HCT116 (cell line): ENCODE measurements at regions of chr17 and their contacts with region 1.

Region 1: DNA sequence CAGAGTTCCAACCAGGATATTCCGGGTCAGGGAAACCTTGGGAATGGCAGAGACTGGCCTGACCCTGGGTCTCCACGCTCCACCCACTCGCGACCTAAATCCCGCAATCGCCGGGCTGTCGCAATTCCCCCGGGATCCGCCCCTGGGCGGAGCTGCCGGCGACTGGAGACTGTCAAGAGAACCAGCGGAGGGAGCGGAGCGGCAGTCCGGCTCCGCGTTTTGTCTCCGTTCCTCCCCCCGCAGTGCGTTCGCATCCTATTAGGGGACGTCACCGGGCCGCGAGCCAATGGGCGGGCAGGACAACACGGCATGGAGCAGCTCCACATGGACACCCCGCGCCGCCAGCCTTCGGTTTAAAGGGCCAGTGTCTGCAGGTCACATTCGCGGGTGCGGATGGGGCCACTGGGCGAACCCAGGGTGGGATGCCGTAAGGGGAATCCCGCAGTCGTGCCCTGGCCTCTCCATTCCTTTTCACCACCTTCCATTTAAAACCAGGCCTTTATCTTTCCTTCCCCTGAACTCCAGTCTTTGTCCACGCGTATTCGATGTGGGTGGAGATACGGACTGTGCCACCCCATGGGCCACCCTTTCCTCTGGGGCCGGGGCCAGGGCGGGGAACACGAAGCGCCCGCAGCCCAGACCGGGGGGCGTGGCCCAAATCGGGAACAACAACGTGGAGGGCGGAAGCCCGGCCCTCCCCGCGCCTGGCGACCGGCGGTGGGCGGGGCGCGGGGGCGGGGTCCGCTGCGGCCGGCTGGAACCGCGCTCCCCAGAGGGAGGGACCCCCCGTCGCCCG is 764 bp upstream of the MNT start:
- DNase-seq: peak; percentile 98
- ATAC-seq: peak; percentile 56
- H3K4me3 ChIP-seq: peak overlapping the region; percentile 48 to 96
- H3K27ac ChIP-seq: peak overlapping the region; percentile 97
- H3K4me1 ChIP-seq: peaks cover 49 to 83% of the 10 kb centered on the region in 2 experiments
- H3K27me3 ChIP-seq: no peaks in the 10 kb centered on the region
- CTCF ChIP-seq: no peak
- POLR2A ChIP-seq: no peak
- RAD21 ChIP-seq: no peak

Region 2: DNA sequence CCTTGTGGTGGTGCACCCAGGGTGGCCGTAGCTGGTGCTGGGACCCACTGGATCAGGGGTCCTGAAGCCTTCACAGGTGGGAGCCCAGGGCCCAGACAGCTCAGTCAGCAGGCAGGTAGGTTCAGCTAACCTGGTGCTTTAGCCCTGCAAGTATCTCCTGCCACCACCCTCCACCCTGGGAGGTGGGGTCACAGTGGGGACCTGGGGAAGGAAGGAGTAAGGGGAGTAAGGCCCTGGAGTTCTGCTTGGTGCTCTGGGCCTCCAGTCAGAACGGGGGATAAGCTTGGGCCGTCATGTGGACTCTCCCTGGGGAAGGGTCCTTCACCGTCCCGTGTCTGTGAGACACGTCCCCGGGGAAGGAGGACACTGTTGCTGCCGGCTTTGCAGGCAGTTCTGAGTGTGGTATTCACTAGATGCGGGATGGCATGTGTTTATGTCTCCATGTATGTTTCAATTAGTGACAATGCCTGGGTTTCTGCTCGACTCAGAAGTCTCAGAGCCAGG is 43.6 kb before region 1 on chr17:
- CTCF ChIA-PET with region 1: interaction called, 3 read pairs
- POLR2A ChIA-PET with region 1: interaction called, 3 read pairs
- RAD21 ChIA-PET with region 1: no interaction called
- intact Hi-C with region 1: loop called (anchors 2 kb)
- DNase-seq: no peak
- ATAC-seq: no peak
- H3K4me3 ChIP-seq: no peak overlapping the region
- H3K27ac ChIP-seq: peak overlapping the region; percentile 99
- H3K4me1 ChIP-seq: peaks cover 37 to 53% of the 10 kb centered on the region in 2 experiments
- H3K27me3 ChIP-seq: no peaks in the 10 kb centered on the region
- CTCF ChIP-seq: no peak
- POLR2A ChIP-seq: no peak
- RAD21 ChIP-seq: no peak

Region 3: GRCh38 chr17:2386400-2387085 is 15.1 kb before region 1 on chr17:
- CTCF ChIA-PET with region 1: interaction called, 38 read pairs
- POLR2A ChIA-PET with region 1: interaction called, 7 read pairs
- RAD21 ChIA-PET with region 1: interaction called, 6 to 7 read pairs
- intact Hi-C with region 1: no loop called
- DNase-seq: no peak
- ATAC-seq: no peak
- H3K4me3 ChIP-seq: no peak overlapping the region
- H3K27ac ChIP-seq: no peak overlapping the region
- H3K4me1 ChIP-seq: peaks cover 5 to 27% of the 10 kb centered on the region in 2 experiments
- H3K27me3 ChIP-seq: no peaks in the 10 kb centered on the region
- CTCF ChIP-seq: no peak
- POLR2A ChIP-seq: no peak
- RAD21 ChIP-seq: no peak

Region 4: DNA sequence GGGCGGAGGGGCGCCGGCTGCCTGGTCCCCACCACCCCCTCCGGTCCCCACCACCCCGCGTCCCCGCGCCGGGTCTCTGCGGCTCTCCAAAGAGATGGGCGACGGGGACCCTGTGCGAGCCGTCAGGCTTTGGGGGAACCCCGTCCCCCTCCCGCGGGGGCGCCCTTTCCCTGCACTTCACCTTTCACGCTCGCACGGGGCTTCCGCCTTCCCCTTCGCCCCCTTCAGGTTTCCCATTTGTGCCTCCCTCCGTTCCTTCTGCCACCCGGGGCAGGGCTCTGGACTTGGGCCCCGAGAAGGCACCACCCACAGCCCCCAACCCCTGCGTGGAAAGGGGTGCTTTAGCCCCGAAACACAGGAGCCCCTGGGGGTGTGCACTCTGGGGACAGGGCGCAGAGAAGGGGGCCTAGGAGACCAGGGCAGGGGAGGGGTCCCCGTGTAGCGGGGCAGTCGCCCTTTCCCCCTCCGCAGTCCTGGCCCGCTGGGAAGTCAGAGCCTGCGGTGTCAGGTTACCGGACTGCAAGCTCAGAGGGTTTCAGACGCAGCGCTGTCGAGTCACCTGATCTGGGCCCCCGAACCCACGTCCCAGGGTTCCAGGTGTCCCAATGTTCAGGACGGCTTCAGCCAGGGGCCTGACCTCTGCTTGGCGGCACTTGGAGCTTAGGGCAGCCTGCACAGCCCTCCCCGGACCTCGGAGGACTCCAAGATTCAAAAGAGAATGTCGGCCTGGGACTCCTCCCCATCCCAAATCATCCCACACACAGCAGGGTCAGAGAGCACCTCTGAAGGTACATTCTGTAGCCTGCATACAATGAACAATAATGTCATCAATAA is 354.5 kb after region 1 on chr17:
- CTCF ChIA-PET with region 1: no interaction called
- POLR2A ChIA-PET with region 1: no interaction called
- RAD21 ChIA-PET with region 1: no interaction called
- intact Hi-C with region 1: no loop called
- DNase-seq: no peak
- ATAC-seq: peak; percentile 69
- H3K4me3 ChIP-seq: peak overlapping the region; percentile 46 to 61
- H3K27ac ChIP-seq: peak overlapping the region; percentile 22; the same call in 1 of the 2 replicates
- H3K4me1 ChIP-seq: peaks cover 4 to 15% of the 10 kb centered on the region in 2 experiments
- H3K27me3 ChIP-seq: no peaks in the 10 kb centered on the region
- CTCF ChIP-seq: no peak
- POLR2A ChIP-seq: no peak
- RAD21 ChIP-seq: no peak